Activated T-helper 1 cell treated with anti-CD3 and anti-CD28 coated beads, Interleukin-12 subunit alpha, Interleukin-12 subunit beta, Interleukin-2, Interleukin-4 antibody, amounts not matched to agents 30 ng/mL and 10 ng/mL and 1 ng/mL, durations not matched to agents 14 hours and 24 hours and 36 hours (primary cell): ENCODE measurements at regions of chr19 and their contacts with region 1.

Region 1: GRCh38 chr19:39328046-39328705 is 7.5 kb upstream of the LRFN1 start:
- DNase-seq: peak; percentile 68
- H3K4me3 Mint-ChIP-seq: no peak overlapping the region
- H3K27ac Mint-ChIP-seq: peak overlapping the region; percentile 35
- H3K4me1 Mint-ChIP-seq: peaks cover 31% of the 10 kb centered on the region
- H3K27me3 Mint-ChIP-seq: no peaks in the 10 kb centered on the region

Region 2: GRCh38 chr19:39212375-39212742 is 115.8 kb before region 1 on chr19:
- intact Hi-C with region 1: loop called (anchors 1 kb)
- DNase-seq: peak; percentile 38
- H3K4me3 Mint-ChIP-seq: no peak overlapping the region
- H3K27ac Mint-ChIP-seq: no peak overlapping the region
- H3K4me1 Mint-ChIP-seq: no peaks in the 10 kb centered on the region
- H3K27me3 Mint-ChIP-seq: peaks cover 4% of the 10 kb centered on the region

Region 3: DNA sequence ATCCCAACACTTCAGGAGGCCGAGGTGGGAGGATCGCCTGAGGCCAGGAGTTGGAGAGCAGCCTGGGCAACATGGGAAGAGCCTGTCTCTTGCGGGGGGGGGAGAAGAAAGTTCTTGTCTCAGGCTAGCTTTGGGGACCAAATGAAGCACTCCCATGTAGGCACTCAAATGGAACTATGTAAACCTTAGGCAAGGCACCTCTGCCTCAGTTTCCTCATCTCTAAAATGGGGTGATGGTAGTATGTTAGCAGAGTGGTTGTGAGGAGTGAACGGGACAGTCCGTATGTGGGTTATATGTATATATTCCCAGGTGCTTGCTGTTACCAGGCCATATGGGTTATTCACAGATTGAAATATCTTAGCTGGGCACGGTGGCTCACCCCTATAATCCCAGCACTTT is 164.0 kb after region 1 on chr19:
- intact Hi-C with region 1: no loop called
- DNase-seq: no peak
- H3K4me3 Mint-ChIP-seq: no peak overlapping the region
- H3K27ac Mint-ChIP-seq: no peak overlapping the region
- H3K4me1 Mint-ChIP-seq: no peaks in the 10 kb centered on the region
- H3K27me3 Mint-ChIP-seq: peaks cover 5% of the 10 kb centered on the region